ENCODE measurements at regions of chr3 and their contacts with region 1.

Region 1: DNA sequence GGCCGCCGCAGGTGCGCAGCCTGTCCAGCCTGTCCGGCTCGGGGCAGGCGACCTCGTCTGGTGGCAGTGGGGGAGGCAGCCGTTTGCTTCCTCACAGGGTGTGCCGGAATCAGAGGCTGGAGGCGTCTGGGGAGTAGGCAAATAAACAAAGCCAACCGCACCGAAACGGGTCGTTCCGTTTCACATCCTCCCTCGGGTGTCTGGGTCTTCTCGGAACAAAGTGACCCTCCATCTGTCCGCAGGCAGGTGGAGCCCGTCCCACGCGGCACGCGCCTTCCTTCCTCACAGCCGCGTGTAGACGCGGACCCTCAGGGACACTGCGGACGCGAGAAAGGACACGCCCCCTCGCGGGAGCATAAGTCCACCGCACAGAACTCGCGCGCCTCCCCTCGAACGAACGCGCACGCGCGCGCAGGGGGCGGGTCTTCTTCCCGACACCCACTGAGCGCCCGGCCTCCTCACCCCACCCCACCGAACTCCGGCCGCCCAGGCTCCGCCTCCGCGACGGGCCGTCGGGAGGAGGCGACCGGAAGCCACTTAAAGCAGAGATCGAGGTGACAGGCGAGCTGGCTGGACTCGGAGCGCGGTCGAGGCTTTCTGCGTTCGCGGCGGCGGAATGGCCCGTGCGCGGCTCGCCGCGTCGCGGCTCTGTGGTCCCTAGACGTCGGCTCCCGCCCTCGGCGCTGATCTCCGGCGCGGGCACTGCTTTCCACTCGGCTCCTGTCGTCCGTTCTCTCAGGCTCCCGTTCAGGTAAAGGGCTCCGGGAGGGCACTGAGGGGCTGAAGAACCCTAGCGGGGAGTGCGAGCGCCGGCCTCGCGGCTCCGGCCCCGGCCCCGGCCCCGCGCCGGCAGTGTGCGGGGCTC is at the start of gene TIPARP:
- DNase-seq: peak; percentile 99
- H3K4me3 ChIP-seq: peak within 1 kb of the TSS; percentile 79 to 96 (median 82)
- H3K27ac ChIP-seq: peak within 1 kb of the TSS; percentile 80
- H3K4me1 ChIP-seq: peaks cover 31% of the 10 kb centered on the region
- H3K27me3 ChIP-seq: no peaks in the 10 kb centered on the region
- CTCF ChIP-seq: peak; percentile 41 to 60
- POLR2A ChIP-seq: peak; percentile 98
- total RNA-seq, gene TIPARP: 20.0 and 21.2 TPM in 2 replicates

Region 2: DNA sequence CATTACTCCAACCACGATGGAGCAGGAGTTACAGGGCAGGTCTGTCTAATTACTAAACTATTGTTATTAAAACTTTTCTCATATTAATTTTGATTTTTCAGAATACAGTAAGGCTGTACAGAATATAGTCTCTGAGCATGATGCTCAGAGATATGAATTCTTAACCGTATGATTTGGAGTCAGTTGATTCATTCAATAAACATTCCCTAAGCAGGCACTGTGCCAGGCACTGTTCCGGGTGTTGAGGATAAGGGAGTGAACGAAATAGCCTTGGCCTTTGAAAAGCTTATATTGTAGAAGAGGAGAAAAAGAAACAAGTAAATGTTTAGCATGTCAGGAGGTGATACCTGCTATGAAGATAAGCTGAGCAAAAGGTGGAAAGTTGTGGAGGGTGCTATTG is 366.6 kb before region 1 on chr3:
- CTCF ChIA-PET with region 1: no interaction called
- POLR2A ChIA-PET with region 1: no interaction called
- dilution Hi-C with region 1: no loop called
- intact Hi-C with region 1: loop called (anchors 5 kb)
- DNase-seq: peak; percentile 89
- H3K4me3 ChIP-seq: no peak overlapping the region
- H3K27ac ChIP-seq: peak overlapping the region; percentile 57
- H3K4me1 ChIP-seq: peaks cover 48% of the 10 kb centered on the region
- H3K27me3 ChIP-seq: no peaks in the 10 kb centered on the region
- CTCF ChIP-seq: no peak
- POLR2A ChIP-seq: no peak

Region 3: DNA sequence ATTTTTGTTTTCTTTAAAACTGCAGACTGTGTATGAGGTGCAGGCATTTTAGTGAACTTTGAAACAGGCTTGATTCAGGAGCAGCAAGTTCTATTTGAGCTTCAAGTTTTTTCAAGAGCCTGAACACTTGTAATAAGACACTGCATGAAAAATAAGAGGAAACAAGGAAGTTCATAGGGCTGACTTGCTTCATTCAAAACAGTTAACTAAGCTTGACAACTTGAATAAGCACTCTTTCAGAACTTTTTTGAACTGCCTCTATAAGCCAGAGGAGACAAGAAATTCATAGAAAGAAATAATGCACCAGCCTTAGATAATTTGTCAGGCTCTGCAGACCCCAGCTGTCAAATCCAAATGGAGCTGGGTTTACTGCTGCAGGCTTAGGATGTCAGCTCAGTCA is 249.5 kb before region 1 on chr3:
- CTCF ChIA-PET with region 1: no interaction called
- POLR2A ChIA-PET with region 1: no interaction called
- dilution Hi-C with region 1: no loop called
- intact Hi-C with region 1: no loop called
- DNase-seq: peak; percentile 5
- H3K4me3 ChIP-seq: no peak overlapping the region
- H3K27ac ChIP-seq: no peak overlapping the region
- H3K4me1 ChIP-seq: no peaks in the 10 kb centered on the region
- H3K27me3 ChIP-seq: no peaks in the 10 kb centered on the region
- CTCF ChIP-seq: no peak
- POLR2A ChIP-seq: no peak

Region 4: GRCh38 chr3:156554842-156555687 is 119.2 kb before region 1 on chr3 and contains the start of gene SSR3:
- CTCF ChIA-PET with region 1: interaction called, 31 read pairs
- POLR2A ChIA-PET with region 1: interaction called, 7 read pairs
- dilution Hi-C with region 1: no loop called
- intact Hi-C with region 1: loop called (anchors 1 kb)
- DNase-seq: peak; percentile 99
- H3K4me3 ChIP-seq: peak within 1 kb of the TSS; percentile 79 to 97 (median 94)
- H3K27ac ChIP-seq: peak within 1 kb of the TSS; percentile 87
- H3K4me1 ChIP-seq: peaks cover 42% of the 10 kb centered on the region
- H3K27me3 ChIP-seq: no peaks in the 10 kb centered on the region
- CTCF ChIP-seq: no peak
- POLR2A ChIP-seq: peak; percentile 93
- total RNA-seq, gene SSR3: 355 and 370 TPM in 2 replicates

Region 5: DNA sequence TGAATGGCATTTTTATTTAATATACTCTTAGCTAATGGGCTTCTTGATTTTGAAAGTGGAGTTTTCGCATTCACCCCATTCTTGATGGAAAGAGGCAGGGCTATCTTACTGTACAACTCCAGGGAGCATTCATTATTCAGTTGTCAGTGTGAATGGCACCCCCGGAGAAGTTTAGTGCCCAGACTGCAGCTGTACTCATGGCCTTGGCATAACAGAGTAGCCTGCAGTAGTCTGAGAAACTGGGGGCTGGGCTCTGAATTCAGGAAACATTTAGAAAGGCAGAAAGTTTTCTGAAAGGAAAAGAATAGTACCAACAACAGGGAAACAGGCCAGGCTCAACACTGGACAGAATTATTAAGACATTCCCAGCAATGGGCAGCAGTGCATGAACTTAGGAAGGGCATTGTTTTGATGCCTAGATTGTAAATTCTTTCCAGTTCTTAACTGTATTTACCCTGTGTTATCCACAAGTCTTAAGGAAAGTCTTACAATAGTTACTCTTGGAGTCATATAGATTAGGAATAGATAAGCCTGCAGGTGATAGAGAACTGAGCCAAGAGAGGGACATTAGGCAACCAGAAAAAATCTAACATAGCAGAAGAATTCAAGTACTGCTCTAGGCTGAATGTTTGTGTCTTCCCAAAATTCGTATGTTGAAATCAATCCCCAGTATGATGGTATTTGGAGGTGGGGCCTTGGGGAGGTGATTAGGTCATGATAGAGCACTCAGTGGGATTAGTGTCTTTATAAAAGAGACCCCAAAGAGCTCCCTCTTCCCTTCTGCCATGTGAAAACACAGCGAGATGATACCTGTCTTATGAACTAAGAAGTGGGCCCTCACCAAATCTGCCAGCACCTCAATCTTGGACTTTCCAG is 44.6 kb after region 1 on chr3:
- CTCF ChIA-PET with region 1: interaction called, 5 read pairs
- POLR2A ChIA-PET with region 1: no interaction called
- dilution Hi-C with region 1: no loop called
- intact Hi-C with region 1: loop called (anchors 2 kb)
- DNase-seq: peak; percentile 88
- H3K4me3 ChIP-seq: no peak overlapping the region
- H3K27ac ChIP-seq: no peak overlapping the region
- H3K4me1 ChIP-seq: no peaks in the 10 kb centered on the region
- H3K27me3 ChIP-seq: no peaks in the 10 kb centered on the region
- CTCF ChIP-seq: no peak
- POLR2A ChIP-seq: no peak

Region 6: GRCh38 chr3:156826144-156826895 is 152.0 kb after region 1 on chr3 and contains the start of gene LEKR1:
- CTCF ChIA-PET with region 1: interaction called, 3 read pairs
- POLR2A ChIA-PET with region 1: no interaction called
- dilution Hi-C with region 1: no loop called
- intact Hi-C with region 1: loop called (anchors 1 kb)
- DNase-seq: peak; percentile 89
- H3K4me3 ChIP-seq: peak within 1 kb of the TSS; percentile 45 to 90 (median 55)
- H3K27ac ChIP-seq: peak within 1 kb of the TSS; percentile 100
- H3K4me1 ChIP-seq: peaks cover 20% of the 10 kb centered on the region
- H3K27me3 ChIP-seq: no peaks in the 10 kb centered on the region
- CTCF ChIP-seq: no peak
- POLR2A ChIP-seq: peak; percentile 53
- total RNA-seq, gene LEKR1: 0.21 and 0.64 TPM in 2 replicates

Region 7: DNA sequence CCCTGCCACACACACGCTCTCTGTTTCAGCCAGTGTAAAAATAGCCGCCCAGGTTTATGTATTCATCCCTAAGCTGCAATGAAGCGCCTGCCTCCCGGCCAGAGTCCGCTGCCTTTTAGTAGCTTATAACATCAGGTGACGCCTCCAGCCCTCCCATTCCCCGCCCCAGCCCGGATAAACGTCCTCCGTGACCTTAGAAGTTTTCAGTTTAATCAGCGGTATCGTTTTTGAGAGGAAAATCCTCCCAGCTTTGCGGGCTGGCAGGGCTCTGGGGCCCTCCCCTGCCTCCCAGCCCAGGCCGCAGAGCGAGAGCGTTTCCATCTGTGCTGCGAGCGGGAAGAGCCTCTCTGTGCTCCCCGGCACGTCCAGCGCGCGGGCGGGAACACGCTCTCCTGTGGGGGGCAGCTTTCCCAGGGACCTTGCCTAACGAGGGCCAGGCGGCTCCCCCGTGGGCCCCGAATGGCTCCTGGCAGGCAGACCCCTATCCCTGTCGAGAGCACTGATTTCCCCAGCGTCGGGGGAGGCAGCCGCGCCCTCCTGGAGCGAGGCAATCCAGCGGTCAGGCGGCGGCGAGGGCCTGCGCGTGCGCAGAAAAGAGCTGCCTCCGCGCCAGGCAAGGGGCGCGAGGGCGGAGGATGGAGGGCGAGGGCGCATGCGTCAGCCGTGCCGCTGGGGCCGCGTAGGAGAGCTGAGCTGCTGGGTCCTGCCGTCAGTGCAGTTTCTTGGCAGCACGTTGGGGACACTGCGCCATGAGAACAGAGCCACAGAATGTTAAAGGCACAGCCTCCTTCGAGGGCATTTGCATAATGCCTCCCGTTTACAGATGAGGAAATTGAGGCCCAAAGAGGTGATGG is 414.6 kb after region 1 on chr3:
- CTCF ChIA-PET with region 1: interaction called, 70 read pairs
- POLR2A ChIA-PET with region 1: interaction called, 5 read pairs
- dilution Hi-C with region 1: no loop called
- intact Hi-C with region 1: loop called (anchors 1 kb)
- DNase-seq: peak; percentile 96
- H3K4me3 ChIP-seq: peak overlapping the region; percentile 36 to 61 (median 54)
- H3K27ac ChIP-seq: peak overlapping the region; percentile 86
- H3K4me1 ChIP-seq: peaks cover 26% of the 10 kb centered on the region
- H3K27me3 ChIP-seq: no peaks in the 10 kb centered on the region
- CTCF ChIP-seq: peak in 1 of 2 donors; percentile 9
- POLR2A ChIP-seq: peak; percentile 72

Region 8: DNA sequence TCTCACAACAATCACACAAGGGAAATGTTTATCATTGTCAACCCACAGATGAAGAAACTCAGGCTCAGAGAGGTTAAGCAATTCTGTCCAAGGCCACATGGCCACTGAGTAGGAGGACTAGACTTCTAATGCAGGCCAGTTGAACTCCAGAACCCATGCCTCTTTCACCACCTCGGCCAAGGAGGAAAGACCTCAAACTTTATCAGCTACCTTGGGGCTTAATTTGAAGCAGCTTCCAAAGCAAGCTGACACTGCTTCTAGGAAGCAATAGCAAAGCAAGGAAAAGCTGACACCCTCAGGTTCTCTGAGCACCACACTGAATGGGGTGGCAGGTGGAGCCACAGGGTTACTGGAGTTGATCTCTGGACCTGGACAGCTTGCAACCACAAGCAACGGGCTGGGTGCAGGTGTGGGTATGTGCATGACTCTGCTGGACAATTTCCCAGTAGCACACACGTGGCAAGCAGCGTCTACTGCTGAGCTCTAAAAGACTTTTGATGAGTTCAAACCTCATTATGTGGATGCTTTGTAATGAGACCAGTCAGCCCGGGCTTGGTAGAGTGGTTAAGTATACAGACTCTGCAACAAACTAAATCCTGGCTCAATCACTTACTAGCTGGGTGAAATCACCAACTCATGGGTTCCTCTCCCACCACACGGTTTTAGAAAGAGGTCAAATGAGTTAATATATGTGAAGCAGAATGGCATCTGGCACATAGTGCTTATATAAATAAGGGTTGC is 462.5 kb after region 1 on chr3:
- CTCF ChIA-PET with region 1: interaction called, 17 read pairs
- POLR2A ChIA-PET with region 1: no interaction called
- dilution Hi-C with region 1: loop called (anchors 25 kb)
- intact Hi-C with region 1: no loop called
- DNase-seq: no peak
- H3K4me3 ChIP-seq: no peak overlapping the region
- H3K27ac ChIP-seq: no peak overlapping the region
- H3K4me1 ChIP-seq: peaks cover 6% of the 10 kb centered on the region
- H3K27me3 ChIP-seq: no peaks in the 10 kb centered on the region
- CTCF ChIP-seq: no peak
- POLR2A ChIP-seq: no peak